ENCODE measurements at regions of chr11 and their contacts with region 1.

Region 1: DNA sequence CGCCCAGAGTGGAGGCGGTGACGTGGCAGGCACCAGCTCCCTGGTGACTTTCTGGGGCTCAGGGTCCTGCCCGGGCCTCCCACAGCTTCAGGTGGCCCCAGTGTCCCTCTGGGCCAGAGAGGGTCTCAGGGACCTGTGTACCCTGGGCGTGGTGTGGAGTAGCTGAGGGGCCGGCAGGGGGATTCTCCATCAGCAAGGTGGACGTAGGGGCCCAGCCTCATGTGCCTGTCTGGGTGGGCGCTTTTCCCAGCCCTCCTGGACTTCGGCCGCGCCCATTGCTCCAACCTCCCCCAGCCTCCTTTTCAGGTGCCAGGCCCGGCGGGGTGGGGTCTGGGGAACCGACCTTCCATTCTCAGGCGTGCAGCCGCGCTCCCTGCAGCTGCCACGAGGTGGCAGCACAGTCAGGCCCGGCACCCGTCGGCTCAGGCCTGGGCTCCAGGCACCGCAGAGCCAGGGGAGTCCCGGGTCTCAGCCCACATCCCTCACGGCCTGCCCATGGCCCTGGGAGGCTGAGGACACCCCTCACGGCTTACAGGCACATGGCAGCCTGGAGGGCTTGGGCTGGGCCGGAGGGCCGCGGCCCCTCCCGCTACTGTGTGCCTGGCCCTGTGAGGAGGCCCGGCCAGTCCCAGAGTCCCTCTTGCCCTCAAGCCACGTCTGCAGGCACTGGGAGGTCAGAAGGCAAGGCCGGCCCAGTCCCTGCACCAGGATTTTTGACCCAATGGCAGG is 19.9 kb upstream of the MUC5B start:
- DNase-seq: peak; percentile 66
- H3K4me3 ChIP-seq: no peak overlapping the region
- H3K27ac ChIP-seq: no peak overlapping the region
- H3K4me1 ChIP-seq: peaks cover 0 to 7% (median 3%) of the 10 kb centered on the region in 4 donors
- H3K27me3 ChIP-seq: peaks cover 3 to 56% (median 30%) of the 10 kb centered on the region in 3 donors
- CTCF ChIP-seq: peak; percentile 57 to 92 (median 79)
- EP300 ChIP-seq: no peak
- POLR2A ChIP-seq: no peak

Region 2: GRCh38 chr11:908273-908672 is 294.7 kb before region 1 on chr11:
- intact Hi-C with region 1: no loop called
- DNase-seq: no peak
- H3K4me3 ChIP-seq: no peak overlapping the region
- H3K27ac ChIP-seq: no peak overlapping the region
- H3K4me1 ChIP-seq: peaks cover 0 to 27% (median 18%) of the 10 kb centered on the region in 4 donors
- H3K27me3 ChIP-seq: no peaks in the 10 kb centered on the region
- CTCF ChIP-seq: no peak
- EP300 ChIP-seq: no peak
- POLR2A ChIP-seq: no peak

Region 3: DNA sequence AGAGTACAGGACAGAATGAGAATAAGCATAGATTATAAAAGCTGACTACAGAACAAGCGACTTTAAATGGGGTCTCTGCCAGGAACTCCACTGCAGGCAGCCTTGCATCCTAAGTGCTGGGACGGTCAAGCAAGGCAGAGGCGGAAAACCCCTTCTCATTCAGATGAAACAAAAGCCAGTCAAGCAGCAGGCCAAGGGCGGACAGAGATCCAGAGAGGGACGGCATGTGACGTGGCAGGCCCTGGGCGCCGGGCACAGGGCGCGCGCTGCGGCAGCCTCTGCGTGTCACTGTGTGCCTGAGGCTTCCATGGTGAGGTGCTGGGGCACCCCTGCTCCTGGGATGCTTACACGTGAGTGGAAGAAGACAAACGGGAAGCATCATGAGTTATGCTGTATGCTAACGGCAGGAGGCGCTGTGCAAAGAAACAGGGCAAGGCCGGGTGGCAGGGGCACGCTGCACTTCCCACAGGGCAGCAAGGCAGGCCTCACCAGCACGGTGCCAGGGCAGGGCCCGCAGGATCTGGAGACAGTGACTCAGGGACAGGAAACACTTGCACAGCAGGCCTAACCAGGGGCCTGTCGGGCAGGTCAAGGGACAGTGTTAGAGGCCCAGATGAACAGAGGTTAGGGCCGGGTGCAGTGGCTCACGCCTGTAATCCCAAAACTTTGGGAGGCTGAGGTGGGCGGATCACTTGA is 100.3 kb after region 1 on chr11:
- intact Hi-C with region 1: loop called (anchors 5 kb)
- DNase-seq: no peak
- H3K4me3 ChIP-seq: no peak overlapping the region
- H3K27ac ChIP-seq: peak overlapping the region; percentile 68 to 76 (median 72)
- H3K4me1 ChIP-seq: peaks cover 0 to 87% (median 75%) of the 10 kb centered on the region in 4 donors
- H3K27me3 ChIP-seq: no peaks in the 10 kb centered on the region
- CTCF ChIP-seq: no peak
- EP300 ChIP-seq: no peak
- POLR2A ChIP-seq: no peak

Region 4: DNA sequence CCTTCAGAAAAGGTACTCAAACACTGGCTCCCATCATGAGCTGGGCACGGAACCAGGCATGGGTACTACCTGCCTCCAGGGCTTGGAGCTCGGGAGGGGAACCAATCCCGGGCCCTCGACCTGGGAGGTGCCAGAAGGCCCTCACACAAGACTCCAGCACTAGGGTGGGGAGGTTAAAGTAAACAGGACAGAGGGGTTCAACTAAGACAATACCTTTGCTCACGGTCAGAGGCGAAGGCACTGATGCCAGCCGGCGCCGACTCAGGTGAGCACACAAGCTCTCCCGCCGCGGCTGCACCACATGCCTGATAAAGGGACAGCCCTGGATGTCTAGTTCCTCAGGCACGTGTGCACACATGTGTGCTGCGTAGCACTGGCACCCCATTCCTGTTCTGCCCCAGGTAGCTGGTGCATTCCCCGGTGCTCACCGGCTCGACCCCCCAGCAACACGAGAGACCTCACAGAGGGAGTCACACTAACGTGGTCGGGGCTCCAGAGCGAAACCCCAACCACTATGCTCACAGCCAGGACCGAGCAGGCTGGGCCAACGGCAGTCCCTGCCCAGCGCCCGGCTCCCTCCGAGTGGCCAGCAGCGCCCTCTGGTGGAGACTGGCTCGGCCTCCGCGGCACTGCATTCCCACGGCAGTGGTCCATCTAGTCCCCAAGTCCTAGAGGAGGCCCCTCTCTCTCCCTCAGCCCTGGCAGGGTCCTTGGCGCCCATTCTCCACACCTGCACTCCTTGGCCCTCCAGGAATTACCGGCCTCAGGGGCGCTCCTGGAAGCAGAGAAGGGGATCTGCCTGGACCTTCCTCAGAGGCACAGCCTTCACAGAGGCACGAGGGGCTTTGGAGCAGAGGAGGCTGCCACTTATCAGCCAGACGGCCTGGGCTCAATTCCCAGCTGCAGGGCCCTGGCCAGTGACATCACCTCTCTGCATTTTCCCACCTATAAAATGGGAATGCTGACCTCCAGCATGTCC is 312.4 kb after region 1 on chr11:
- intact Hi-C with region 1: loop called (anchors 1 kb)
- DNase-seq: peak; percentile 88
- H3K4me3 ChIP-seq: peak overlapping the region in 2 of 4 donors; percentile 15 to 20
- H3K27ac ChIP-seq: peak overlapping the region in 3 of 4 donors; percentile 39 to 56 (median 44)
- H3K4me1 ChIP-seq: peaks cover 0 to 67% (median 50%) of the 10 kb centered on the region in 4 donors
- H3K27me3 ChIP-seq: no peaks in the 10 kb centered on the region
- CTCF ChIP-seq: peak; percentile 89 to 96 (median 92)
- EP300 ChIP-seq: no peak
- POLR2A ChIP-seq: no peak